Activated CD8-positive, alpha-beta T cell treated with anti-CD3 and anti-CD28 coated beads for 36 hours (primary cell): ENCODE measurements at regions of chr16 and their contacts with region 1.

Region 1: GRCh38 chr16:28193530-28194423 is 18.0 kb downstream of the XPO6 start:
- DNase-seq: peak; percentile 77
- ATAC-seq: peak; percentile 57
- H3K4me3 Mint-ChIP-seq: peak overlapping the region; percentile 78
- H3K27ac Mint-ChIP-seq: peak overlapping the region; percentile 98
- H3K4me1 Mint-ChIP-seq: peaks cover 78% of the 10 kb centered on the region
- H3K27me3 Mint-ChIP-seq: no peaks in the 10 kb centered on the region
- CTCF ChIP-seq: no peak

Region 2: DNA sequence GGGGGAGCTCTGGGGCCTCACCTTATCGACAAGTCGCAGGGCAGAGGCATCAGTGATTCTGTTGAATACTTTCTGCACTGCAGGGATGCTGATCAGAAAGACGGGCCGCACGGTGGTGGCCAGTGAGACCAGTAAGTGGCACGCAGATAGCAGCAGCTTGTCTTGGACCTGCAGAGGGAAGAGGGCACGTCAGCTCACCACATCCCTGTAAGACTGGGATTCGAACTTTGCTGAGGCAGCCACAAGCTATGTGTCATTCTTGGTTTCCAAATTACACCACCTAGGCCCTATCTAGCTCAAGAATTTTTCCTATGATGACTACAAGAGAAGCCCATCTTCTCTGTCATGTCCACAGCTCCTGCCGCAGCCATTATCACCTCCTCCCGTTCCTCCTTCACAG is 80.9 kb before region 1 on chr16:
- CTCF ChIA-PET with region 1: no interaction called
- POLR2A ChIA-PET with region 1: no interaction called
- intact Hi-C with region 1: no loop called
- DNase-seq: no peak
- ATAC-seq: peak; percentile 75
- H3K4me3 Mint-ChIP-seq: no peak overlapping the region
- H3K27ac Mint-ChIP-seq: peak overlapping the region; percentile 53
- H3K4me1 Mint-ChIP-seq: peaks cover 17% of the 10 kb centered on the region
- H3K27me3 Mint-ChIP-seq: no peaks in the 10 kb centered on the region
- CTCF ChIP-seq: no peak

Region 3: DNA sequence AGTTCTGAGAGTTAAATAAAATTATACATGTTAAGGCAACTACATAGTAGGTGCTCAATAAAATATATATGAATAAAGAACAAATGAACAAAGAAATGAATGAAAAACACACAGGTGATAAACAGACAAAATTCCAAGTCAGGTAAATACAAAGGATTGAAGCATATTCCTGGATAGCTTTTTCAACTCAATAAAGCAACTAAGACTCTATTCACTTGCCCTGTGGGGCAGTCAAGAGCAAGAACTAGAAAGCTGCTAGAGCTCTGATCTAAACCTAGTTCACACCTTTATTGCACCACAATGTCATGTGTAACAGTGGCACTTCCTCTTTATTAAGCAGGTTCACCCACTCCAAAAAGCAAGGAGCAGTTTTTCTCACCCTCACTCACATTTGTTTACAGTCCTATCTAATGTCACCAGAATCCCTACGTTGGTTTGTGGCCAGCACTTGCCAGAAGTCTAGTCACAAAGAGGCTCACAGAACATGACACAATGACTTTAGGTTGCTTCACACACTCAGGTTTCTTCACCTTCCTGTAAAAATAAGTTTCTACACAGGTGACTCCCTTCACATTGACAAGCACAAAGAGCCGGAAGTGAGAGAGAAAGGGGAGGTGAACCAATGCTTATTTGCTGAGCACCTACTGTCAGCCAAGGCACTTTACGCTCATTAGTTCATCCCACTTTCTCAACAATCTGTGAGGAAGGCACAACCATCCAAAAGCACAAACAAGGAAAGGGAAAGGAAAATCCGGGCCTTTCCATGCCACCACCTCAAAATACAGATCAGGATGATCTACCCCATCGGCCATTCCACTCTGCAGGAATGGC is 52.8 kb before region 1 on chr16:
- CTCF ChIA-PET with region 1: interaction called, 4 read pairs
- POLR2A ChIA-PET with region 1: interaction called, 12 read pairs
- intact Hi-C with region 1: loop called (anchors 2 kb)
- DNase-seq: peak; percentile 89
- ATAC-seq: peak; percentile 77
- H3K4me3 Mint-ChIP-seq: peak overlapping the region; percentile 61
- H3K27ac Mint-ChIP-seq: peak overlapping the region; percentile 94
- H3K4me1 Mint-ChIP-seq: peaks cover 80% of the 10 kb centered on the region
- H3K27me3 Mint-ChIP-seq: no peaks in the 10 kb centered on the region
- CTCF ChIP-seq: peak; percentile 54

Region 4: GRCh38 chr16:28181515-28181914 is 12.3 kb before region 1 on chr16:
- CTCF ChIA-PET with region 1: interaction called, 4 read pairs
- POLR2A ChIA-PET with region 1: interaction called, 31 read pairs
- intact Hi-C with region 1: no loop called
- DNase-seq: no peak
- ATAC-seq: peak; percentile 21
- H3K4me3 Mint-ChIP-seq: no peak overlapping the region
- H3K27ac Mint-ChIP-seq: peak overlapping the region; percentile 96
- H3K4me1 Mint-ChIP-seq: peaks cover 73% of the 10 kb centered on the region
- H3K27me3 Mint-ChIP-seq: no peaks in the 10 kb centered on the region
- CTCF ChIP-seq: no peak

Region 5: DNA sequence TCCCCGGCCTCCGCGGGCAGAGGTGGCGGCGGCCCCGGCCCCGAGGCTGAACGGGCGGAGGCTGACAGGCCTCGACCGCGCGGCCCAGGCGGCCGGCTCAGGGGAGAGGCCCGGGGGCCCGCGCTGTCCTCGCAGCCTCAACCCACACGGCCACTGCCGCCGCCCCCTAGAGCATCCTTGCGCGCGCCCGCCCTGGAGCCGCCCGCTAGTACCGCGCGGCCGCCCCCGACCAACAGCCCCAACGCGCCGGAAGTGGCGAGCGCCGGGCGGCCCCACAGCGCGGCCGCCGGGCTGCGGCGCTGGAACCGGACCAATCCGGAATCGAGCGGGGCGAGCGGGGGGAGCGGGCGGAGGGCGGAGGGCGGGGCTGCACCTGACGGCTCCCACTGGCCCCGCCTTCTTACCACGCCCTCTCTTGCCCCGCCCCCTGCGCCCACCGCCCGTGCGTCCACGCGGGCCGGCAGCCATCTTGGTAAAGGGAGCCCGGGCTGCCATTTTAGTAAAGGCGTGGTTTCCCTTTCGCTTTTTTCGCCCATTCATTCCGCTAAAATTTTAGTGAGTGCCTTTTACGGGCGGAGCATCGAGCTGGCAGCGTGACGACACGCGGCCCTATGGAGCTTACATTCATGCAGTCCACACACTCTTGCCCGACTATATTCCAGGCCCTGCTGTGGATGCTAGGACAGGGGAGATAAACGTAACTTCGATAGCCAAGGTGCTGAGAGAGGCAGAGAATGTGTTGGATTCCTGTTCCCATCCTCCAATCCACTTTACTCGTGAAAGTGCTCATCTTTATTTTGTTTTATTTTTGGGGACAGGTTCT is 18.1 kb after region 1 on chr16 and contains the start of gene XPO6:
- CTCF ChIA-PET with region 1: interaction called, 12 read pairs
- POLR2A ChIA-PET with region 1: interaction called, 124 read pairs
- intact Hi-C with region 1: no loop called
- DNase-seq: peak; percentile 99
- ATAC-seq: peak; percentile 85
- H3K4me3 Mint-ChIP-seq: peak within 1 kb of the TSS; percentile 93
- H3K27ac Mint-ChIP-seq: peak within 1 kb of the TSS; percentile 93
- H3K4me1 Mint-ChIP-seq: peaks cover 24% of the 10 kb centered on the region
- H3K27me3 Mint-ChIP-seq: no peaks in the 10 kb centered on the region
- CTCF ChIP-seq: no peak
- total RNA-seq, gene XPO6: 250 to 253 TPM